GM12878 (cell line): ENCODE measurements at regions of chr11 and their contacts with region 1.

Region 1: DNA sequence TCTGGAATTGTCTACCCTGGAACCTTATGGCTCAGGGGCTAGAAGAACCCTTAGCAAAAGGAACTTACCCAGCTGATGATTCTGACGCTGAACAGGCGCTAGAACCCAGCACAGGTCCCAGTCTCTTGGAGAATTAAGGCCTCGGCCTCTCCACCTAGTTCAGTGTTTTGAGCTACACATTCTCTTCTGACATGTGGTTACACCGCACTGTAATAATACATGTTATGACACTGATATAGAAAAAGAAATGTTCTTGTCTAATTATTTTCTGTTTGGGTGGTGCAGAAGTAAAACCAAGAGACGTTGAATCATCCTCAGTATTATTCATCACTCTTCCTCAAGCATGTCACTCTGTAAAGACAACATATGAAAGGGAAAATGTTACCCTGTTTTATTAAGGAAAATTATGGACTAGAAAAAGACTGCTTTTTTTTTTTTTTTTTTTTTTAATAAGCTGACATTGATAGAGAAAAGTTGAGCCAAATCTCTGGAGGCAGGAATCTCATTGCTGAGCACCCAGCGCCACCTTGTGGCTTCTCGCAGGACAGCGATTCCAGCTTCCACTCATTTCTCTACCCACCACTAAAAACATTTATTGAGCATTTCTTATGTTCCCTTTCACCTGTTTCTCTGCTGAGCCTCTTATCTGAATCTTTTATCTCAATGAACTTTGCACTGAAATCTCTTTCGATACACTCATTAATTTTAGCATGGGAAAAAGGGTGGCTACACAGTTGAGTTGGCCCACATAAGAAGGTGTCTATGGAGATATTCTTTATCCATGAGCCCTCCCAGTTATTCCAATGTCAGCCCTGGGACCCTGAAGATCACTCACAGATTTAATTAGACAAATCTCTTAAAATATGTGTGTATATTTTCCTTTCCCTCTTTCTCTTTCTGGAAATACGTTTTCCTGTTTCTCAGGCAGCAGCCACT is 12.6 kb upstream of the APLNR start:
- DNase-seq: no peak
- ATAC-seq: peak; percentile 78
- H3K4me3 ChIP-seq: no peak overlapping the region
- H3K27ac ChIP-seq: no peak overlapping the region
- H3K4me1 ChIP-seq: no peaks in the 10 kb centered on the region
- H3K27me3 ChIP-seq: no peaks in the 10 kb centered on the region; a peak in 1 of 4 replicates
- CTCF ChIP-seq: peak; percentile 76 to 84 (median 83)
- EP300 ChIP-seq: no peak
- POLR2A ChIP-seq: no peak
- RAD21 ChIP-seq: peak; percentile 77

Region 2: DNA sequence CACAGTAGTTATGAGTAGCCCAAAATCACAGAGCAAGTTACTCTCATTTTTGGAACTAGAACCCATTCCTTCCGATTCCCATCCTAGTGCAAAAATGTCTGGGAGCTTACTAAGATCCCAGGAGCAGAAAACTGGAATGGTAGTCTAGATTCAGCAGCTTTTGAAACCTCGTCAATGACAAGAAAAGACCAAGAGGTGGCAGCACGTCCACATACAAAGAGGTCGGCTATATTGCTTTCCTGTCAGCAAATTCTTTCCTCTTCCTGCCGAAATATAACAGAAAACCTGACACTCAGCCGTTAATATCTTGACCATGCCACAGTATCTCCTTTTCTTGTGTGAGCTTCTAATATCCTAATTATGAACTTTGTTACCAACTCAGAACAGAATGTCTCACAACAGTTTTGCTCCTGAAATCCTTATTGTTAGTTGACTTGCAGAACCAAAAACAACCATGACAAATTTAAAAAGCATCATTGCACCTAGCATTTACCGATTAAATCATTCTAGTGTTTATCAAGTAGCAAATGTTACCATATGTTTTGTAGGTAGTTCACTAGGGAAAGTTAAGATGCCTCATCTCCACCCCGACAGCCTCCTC is 408.3 kb before region 1 on chr11:
- CTCF ChIA-PET with region 1: interaction called, 184 read pairs
- POLR2A ChIA-PET with region 1: no interaction called
- RAD21 ChIA-PET with region 1: interaction called, 75 read pairs
- SMC1A ChIA-PET with region 1: interaction called, 61 read pairs
- in situ Hi-C with region 1: loop called (anchors 5 kb)
- intact Hi-C with region 1: loop called (anchors 1 kb)
- DNase-seq: peak; percentile 7
- ATAC-seq: peak; percentile 68
- H3K4me3 ChIP-seq: no peak overlapping the region
- H3K27ac ChIP-seq: no peak overlapping the region
- H3K4me1 ChIP-seq: no peaks in the 10 kb centered on the region
- H3K27me3 ChIP-seq: no peaks in the 10 kb centered on the region
- CTCF ChIP-seq: peak; percentile 57 to 80 (median 62)
- EP300 ChIP-seq: no peak
- POLR2A ChIP-seq: no peak
- RAD21 ChIP-seq: peak; percentile 82

Region 3: GRCh38 chr11:57001674-57002401 is 247.8 kb before region 1 on chr11:
- CTCF ChIA-PET with region 1: interaction called, 5 read pairs
- POLR2A ChIA-PET with region 1: no interaction called
- RAD21 ChIA-PET with region 1: no interaction called
- SMC1A ChIA-PET with region 1: interaction called, 3 read pairs
- in situ Hi-C with region 1: no loop called
- intact Hi-C with region 1: loop called (anchors 2 kb)
- DNase-seq: no peak
- ATAC-seq: peak; percentile 40; the same call in 1 of the 3 replicates
- H3K4me3 ChIP-seq: no peak overlapping the region
- H3K27ac ChIP-seq: no peak overlapping the region
- H3K4me1 ChIP-seq: no peaks in the 10 kb centered on the region
- H3K27me3 ChIP-seq: no peaks in the 10 kb centered on the region
- CTCF ChIP-seq: peak in 1 of 3 experiments; percentile 22; a peak in 2 of 6 replicates
- EP300 ChIP-seq: no peak
- POLR2A ChIP-seq: no peak
- RAD21 ChIP-seq: no peak

Region 4: GRCh38 chr11:57124917-57125316 is 124.7 kb before region 1 on chr11:
- CTCF ChIA-PET with region 1: interaction called, 83 read pairs
- POLR2A ChIA-PET with region 1: no interaction called
- RAD21 ChIA-PET with region 1: interaction called, 3 read pairs
- SMC1A ChIA-PET with region 1: interaction called, 14 read pairs
- in situ Hi-C with region 1: no loop called
- intact Hi-C with region 1: no loop called
- DNase-seq: no peak
- ATAC-seq: no peak
- H3K4me3 ChIP-seq: no peak overlapping the region
- H3K27ac ChIP-seq: no peak overlapping the region
- H3K4me1 ChIP-seq: no peaks in the 10 kb centered on the region
- H3K27me3 ChIP-seq: peaks cover 1 to 2% of the 10 kb centered on the region in 2 experiments; a peak in 3 of 4 replicates
- CTCF ChIP-seq: no peak
- EP300 ChIP-seq: no peak
- POLR2A ChIP-seq: no peak
- RAD21 ChIP-seq: no peak

Region 5: GRCh38 chr11:57191314-57192219 is 58.1 kb before region 1 on chr11:
- CTCF ChIA-PET with region 1: no interaction called
- POLR2A ChIA-PET with region 1: no interaction called
- RAD21 ChIA-PET with region 1: no interaction called
- SMC1A ChIA-PET with region 1: no interaction called
- in situ Hi-C with region 1: no loop called
- intact Hi-C with region 1: no loop called
- DNase-seq: no peak
- ATAC-seq: no peak
- H3K4me3 ChIP-seq: no peak overlapping the region
- H3K27ac ChIP-seq: no peak overlapping the region
- H3K4me1 ChIP-seq: no peaks in the 10 kb centered on the region
- H3K27me3 ChIP-seq: no peaks in the 10 kb centered on the region; a peak in 1 of 4 replicates
- CTCF ChIP-seq: no peak
- EP300 ChIP-seq: no peak
- POLR2A ChIP-seq: no peak
- RAD21 ChIP-seq: no peak

Region 6: GRCh38 chr11:57213342-57214095 is 36.1 kb before region 1 on chr11:
- CTCF ChIA-PET with region 1: interaction called, 11 read pairs
- POLR2A ChIA-PET with region 1: no interaction called
- RAD21 ChIA-PET with region 1: interaction called, 3 read pairs
- SMC1A ChIA-PET with region 1: interaction called, 5 read pairs
- in situ Hi-C with region 1: no loop called
- intact Hi-C with region 1: no loop called
- DNase-seq: no peak
- ATAC-seq: peak; percentile 47
- H3K4me3 ChIP-seq: no peak overlapping the region
- H3K27ac ChIP-seq: no peak overlapping the region
- H3K4me1 ChIP-seq: no peaks in the 10 kb centered on the region
- H3K27me3 ChIP-seq: no peaks in the 10 kb centered on the region; a peak in 1 of 4 replicates
- CTCF ChIP-seq: no peak
- EP300 ChIP-seq: no peak
- POLR2A ChIP-seq: no peak
- RAD21 ChIP-seq: no peak

Region 7: GRCh38 chr11:57269571-57270021 is 19.9 kb after region 1 on chr11:
- CTCF ChIA-PET with region 1: interaction called, 10 read pairs
- POLR2A ChIA-PET with region 1: no interaction called
- RAD21 ChIA-PET with region 1: interaction called, 3 read pairs
- SMC1A ChIA-PET with region 1: interaction called, 17 read pairs
- in situ Hi-C with region 1: no loop called
- intact Hi-C with region 1: no loop called
- DNase-seq: no peak
- ATAC-seq: no peak
- H3K4me3 ChIP-seq: no peak overlapping the region
- H3K27ac ChIP-seq: no peak overlapping the region
- H3K4me1 ChIP-seq: no peaks in the 10 kb centered on the region
- H3K27me3 ChIP-seq: no peaks in the 10 kb centered on the region; a peak in 1 of 4 replicates
- CTCF ChIP-seq: no peak
- EP300 ChIP-seq: no peak
- POLR2A ChIP-seq: no peak
- RAD21 ChIP-seq: no peak